GM12878 (cell line): ENCODE measurements at regions of chr13 and their contacts with region 1.

Region 1: GRCh38 chr13:73722120-73722519 is 412.1 kb downstream of the KLF12 start:
- DNase-seq: peak; percentile 39
- ATAC-seq: peak; percentile 95
- H3K4me3 ChIP-seq: no peak overlapping the region
- H3K27ac ChIP-seq: no peak overlapping the region
- H3K4me1 ChIP-seq: no peaks in the 10 kb centered on the region
- H3K27me3 ChIP-seq: no peaks in the 10 kb centered on the region
- CTCF ChIP-seq: peak; percentile 26 to 41 (median 36); a peak in 5 of 6 replicates
- EP300 ChIP-seq: peak in 1 of 2 experiments; percentile 16; a peak in 1 of 4 replicates
- POLR2A ChIP-seq: no peak
- RAD21 ChIP-seq: peak; percentile 51; the same call in 1 of the 2 replicates

Region 2: GRCh38 chr13:73288596-73288995 is 433.5 kb before region 1 on chr13:
- CTCF ChIA-PET with region 1: no interaction called
- POLR2A ChIA-PET with region 1: no interaction called
- RAD21 ChIA-PET with region 1: no interaction called
- SMC1A ChIA-PET with region 1: no interaction called
- in situ Hi-C with region 1: no loop called
- intact Hi-C with region 1: no loop called
- DNase-seq: no peak
- ATAC-seq: no peak
- H3K4me3 ChIP-seq: no peak overlapping the region
- H3K27ac ChIP-seq: no peak overlapping the region
- H3K4me1 ChIP-seq: no peaks in the 10 kb centered on the region
- H3K27me3 ChIP-seq: no peaks in the 10 kb centered on the region
- CTCF ChIP-seq: no peak
- EP300 ChIP-seq: no peak
- POLR2A ChIP-seq: no peak
- RAD21 ChIP-seq: no peak

Region 3: GRCh38 chr13:73672492-73672891 is 49.6 kb before region 1 on chr13:
- CTCF ChIA-PET with region 1: no interaction called
- POLR2A ChIA-PET with region 1: no interaction called
- RAD21 ChIA-PET with region 1: no interaction called
- SMC1A ChIA-PET with region 1: no interaction called
- in situ Hi-C with region 1: no loop called
- intact Hi-C with region 1: no loop called
- DNase-seq: no peak
- ATAC-seq: no peak
- H3K4me3 ChIP-seq: no peak overlapping the region
- H3K27ac ChIP-seq: no peak overlapping the region
- H3K4me1 ChIP-seq: no peaks in the 10 kb centered on the region
- H3K27me3 ChIP-seq: no peaks in the 10 kb centered on the region
- CTCF ChIP-seq: no peak
- EP300 ChIP-seq: no peak
- POLR2A ChIP-seq: no peak
- RAD21 ChIP-seq: no peak

Region 4: GRCh38 chr13:73687087-73687486 is 35.0 kb before region 1 on chr13:
- CTCF ChIA-PET with region 1: no interaction called
- POLR2A ChIA-PET with region 1: no interaction called
- RAD21 ChIA-PET with region 1: no interaction called
- SMC1A ChIA-PET with region 1: no interaction called
- in situ Hi-C with region 1: no loop called
- intact Hi-C with region 1: no loop called
- DNase-seq: no peak
- ATAC-seq: no peak
- H3K4me3 ChIP-seq: no peak overlapping the region
- H3K27ac ChIP-seq: no peak overlapping the region
- H3K4me1 ChIP-seq: no peaks in the 10 kb centered on the region
- H3K27me3 ChIP-seq: no peaks in the 10 kb centered on the region
- CTCF ChIP-seq: no peak
- EP300 ChIP-seq: no peak
- POLR2A ChIP-seq: no peak
- RAD21 ChIP-seq: no peak

Region 5: GRCh38 chr13:73765651-73766384 is 43.7 kb after region 1 on chr13:
- CTCF ChIA-PET with region 1: interaction called, 12 read pairs
- POLR2A ChIA-PET with region 1: no interaction called
- RAD21 ChIA-PET with region 1: no interaction called
- SMC1A ChIA-PET with region 1: interaction called, 4 read pairs
- in situ Hi-C with region 1: no loop called
- intact Hi-C with region 1: no loop called
- DNase-seq: no peak
- ATAC-seq: peak; percentile 83
- H3K4me3 ChIP-seq: no peak overlapping the region
- H3K27ac ChIP-seq: peak overlapping the region; percentile 42; the same call in 1 of the 2 replicates
- H3K4me1 ChIP-seq: peaks cover 19% of the 10 kb centered on the region
- H3K27me3 ChIP-seq: no peaks in the 10 kb centered on the region
- CTCF ChIP-seq: no peak
- EP300 ChIP-seq: no peak
- POLR2A ChIP-seq: peak; percentile 32; the same call in 1 of the 2 replicates
- RAD21 ChIP-seq: no peak